Activated CD8-positive, alpha-beta T cell treated with anti-CD3 and anti-CD28 coated beads, Interleukin-2, amount 10 ng/mL, durations not matched to agents 7 days and 5 days (primary cell): ENCODE measurements at regions of chr10 and their contacts with region 1.

Region 1: DNA sequence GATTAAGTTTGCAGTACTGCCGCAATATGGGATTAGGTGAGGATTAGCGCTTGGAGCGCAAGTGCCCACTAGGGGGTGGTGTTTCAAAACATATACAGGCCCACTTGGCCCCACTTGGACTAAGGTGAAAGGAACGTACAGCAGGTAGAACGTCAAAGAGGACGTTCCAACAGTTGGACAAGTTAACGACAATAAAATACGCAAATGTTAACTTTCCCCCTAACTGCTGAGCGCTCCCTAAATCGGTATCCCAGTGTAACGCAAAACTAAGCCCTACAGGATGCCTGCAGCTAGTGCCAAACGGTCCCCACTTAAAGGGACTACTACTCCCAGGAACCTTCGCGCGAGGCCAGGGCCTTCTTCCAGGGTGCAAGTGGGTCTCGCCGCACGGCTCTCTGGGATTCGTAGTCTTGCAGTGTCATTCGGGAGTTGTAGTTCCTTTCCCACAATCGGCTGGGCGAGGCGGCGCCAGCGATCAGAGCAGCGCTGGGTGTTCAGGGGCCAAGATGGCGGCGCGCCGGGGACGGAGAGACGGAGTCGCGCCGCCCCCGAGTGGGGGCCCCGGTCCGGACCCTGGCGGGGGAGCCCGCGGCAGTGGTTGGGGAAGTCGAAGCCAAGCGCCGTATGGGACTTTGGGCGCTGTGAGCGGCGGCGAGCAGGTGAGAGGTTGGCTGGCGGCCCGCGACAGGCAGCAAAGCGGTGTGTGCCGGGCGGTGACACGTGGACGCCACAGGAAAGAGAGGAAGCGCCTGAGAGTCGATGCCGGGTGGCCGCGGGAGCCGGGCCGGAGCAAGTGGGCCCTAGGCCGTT is at the start of gene PPRC1:
- DNase-seq: peak; percentile 99
- ATAC-seq: peak; percentile 93
- H3K4me3 Mint-ChIP-seq: peak within 1 kb of the TSS; percentile 97
- H3K27ac Mint-ChIP-seq: peak within 1 kb of the TSS; percentile 96
- H3K4me1 Mint-ChIP-seq: peaks cover 37% of the 10 kb centered on the region
- H3K27me3 Mint-ChIP-seq: no peaks in the 10 kb centered on the region
- total RNA-seq, gene PPRC1: 56.5 to 58.9 TPM

Region 2: GRCh38 chr10:102114861-102115618 is 17.7 kb before region 1 on chr10:
- CTCF ChIA-PET with region 1: interaction called, 39 read pairs
- POLR2A ChIA-PET with region 1: interaction called, 9 read pairs
- DNase-seq: peak; percentile 91
- ATAC-seq: peak; percentile 75
- H3K4me3 Mint-ChIP-seq: peak overlapping the region; percentile 91
- H3K27ac Mint-ChIP-seq: peak overlapping the region; percentile 93
- H3K4me1 Mint-ChIP-seq: peaks cover 63% of the 10 kb centered on the region
- H3K27me3 Mint-ChIP-seq: no peaks in the 10 kb centered on the region

Region 3: GRCh38 chr10:102120142-102120990 is 12.4 kb before region 1 on chr10 and contains the start of gene LDB1:
- CTCF ChIA-PET with region 1: interaction called, 39 read pairs
- POLR2A ChIA-PET with region 1: interaction called, 9 read pairs
- DNase-seq: peak; percentile 78
- ATAC-seq: peak; percentile 56
- H3K4me3 Mint-ChIP-seq: peak within 1 kb of the TSS; percentile 85
- H3K27ac Mint-ChIP-seq: peak within 1 kb of the TSS; percentile 93
- H3K4me1 Mint-ChIP-seq: peaks cover 55% of the 10 kb centered on the region
- H3K27me3 Mint-ChIP-seq: no peaks in the 10 kb centered on the region
- total RNA-seq, gene LDB1: 83.6 to 87.1 TPM

Region 4: GRCh38 chr10:102151774-102152544 is 19.2 kb after region 1 on chr10 and contains the start of gene NOLC1:
- CTCF ChIA-PET with region 1: interaction called, 29 read pairs
- POLR2A ChIA-PET with region 1: interaction called, 6 read pairs
- DNase-seq: peak; percentile 100
- ATAC-seq: peak; percentile 95
- H3K4me3 Mint-ChIP-seq: peak within 1 kb of the TSS; percentile 98
- H3K27ac Mint-ChIP-seq: peak within 1 kb of the TSS; percentile 98
- H3K4me1 Mint-ChIP-seq: peaks cover 46% of the 10 kb centered on the region
- H3K27me3 Mint-ChIP-seq: no peaks in the 10 kb centered on the region
- total RNA-seq, gene NOLC1: 94.1 to 95.3 TPM